MCF 10A (cell line): ENCODE measurements at regions of chr12 and their contacts with region 1.

Region 1: GRCh38 chr12:59149997-59150642 is 229.8 kb upstream of the LRIG3 start:
- DNase-seq: peak; percentile 84
- H3K4me3 Mint-ChIP-seq: no peak overlapping the region
- H3K27ac Mint-ChIP-seq: no peak overlapping the region
- H3K4me1 Mint-ChIP-seq: peaks cover 11% of the 10 kb centered on the region
- H3K27me3 Mint-ChIP-seq: no peaks in the 10 kb centered on the region
- CTCF ChIP-seq: peak; percentile 91

Region 2: DNA sequence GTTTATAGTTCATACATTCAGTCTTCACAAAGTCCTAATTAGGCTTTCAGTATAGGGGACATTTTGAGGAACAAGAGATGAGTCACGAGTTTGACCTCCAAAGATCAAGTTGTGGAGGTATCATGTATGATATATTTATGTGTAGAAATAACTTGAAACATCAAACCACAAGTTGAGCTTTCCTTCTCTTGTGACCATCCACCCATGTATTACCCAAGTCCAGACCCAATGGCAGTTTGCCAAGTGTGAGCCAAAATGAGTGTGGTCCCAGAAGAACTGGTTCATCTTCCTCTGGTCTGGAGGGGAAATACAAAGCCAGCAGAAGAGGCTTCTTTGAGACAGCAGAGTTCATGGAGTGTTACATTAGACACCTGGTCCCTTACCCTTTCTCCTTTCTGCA is 1103.8 kb before region 1 on chr12:
- CTCF ChIA-PET with region 1: no interaction called
- POLR2A ChIA-PET with region 1: no interaction called
- intact Hi-C with region 1: no loop called
- DNase-seq: no peak
- H3K4me3 Mint-ChIP-seq: no peak overlapping the region
- H3K27ac Mint-ChIP-seq: no peak overlapping the region
- H3K4me1 Mint-ChIP-seq: no peaks in the 10 kb centered on the region
- H3K27me3 Mint-ChIP-seq: no peaks in the 10 kb centered on the region
- CTCF ChIP-seq: no peak

Region 3: GRCh38 chr12:59164991-59165718 is 15.0 kb after region 1 on chr12:
- CTCF ChIA-PET with region 1: interaction called, 35 read pairs
- POLR2A ChIA-PET with region 1: no interaction called
- intact Hi-C with region 1: no loop called
- DNase-seq: peak; percentile 56
- H3K4me3 Mint-ChIP-seq: no peak overlapping the region
- H3K27ac Mint-ChIP-seq: no peak overlapping the region
- H3K4me1 Mint-ChIP-seq: no peaks in the 10 kb centered on the region
- H3K27me3 Mint-ChIP-seq: no peaks in the 10 kb centered on the region
- CTCF ChIP-seq: peak; percentile 23

Region 4: DNA sequence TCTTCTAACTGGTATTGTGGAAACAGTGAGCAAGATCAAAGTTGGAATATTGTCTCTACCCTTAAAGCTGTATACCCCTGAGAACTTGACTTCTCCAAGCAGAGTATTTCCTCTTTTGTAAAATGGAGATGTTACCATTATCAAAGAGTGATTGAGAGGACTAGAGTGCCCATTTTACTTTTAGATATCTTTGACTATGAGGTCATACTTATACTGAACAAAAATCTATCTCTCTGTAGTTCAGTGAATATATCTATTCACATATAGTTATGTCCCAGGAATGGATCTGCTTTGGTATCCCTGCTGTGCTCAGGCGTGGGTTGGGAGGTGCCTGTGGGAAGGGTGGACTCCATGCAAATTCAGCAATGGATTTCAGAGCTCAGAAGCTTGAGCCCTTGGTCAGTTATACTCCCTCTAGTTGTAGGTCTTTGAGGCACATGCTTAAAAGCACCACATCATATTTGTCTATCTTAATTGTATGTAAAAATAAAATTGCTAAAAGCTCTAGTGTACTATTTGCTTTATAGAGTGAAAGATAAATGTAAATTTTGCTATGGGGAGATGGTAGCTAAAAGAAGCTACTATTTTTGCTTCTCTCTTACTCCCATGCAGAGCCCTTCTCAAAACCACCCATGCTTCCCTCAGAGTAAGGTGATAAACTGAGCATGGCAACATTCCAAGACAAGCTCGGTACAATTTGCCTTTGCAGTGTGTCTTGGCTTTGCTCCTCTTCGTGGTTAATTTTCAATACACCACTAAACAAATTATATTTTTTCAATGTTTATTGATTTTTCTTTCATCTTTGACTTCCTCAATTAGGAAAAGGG is 500.5 kb after region 1 on chr12:
- CTCF ChIA-PET with region 1: no interaction called
- POLR2A ChIA-PET with region 1: no interaction called
- intact Hi-C with region 1: no loop called
- DNase-seq: no peak
- H3K4me3 Mint-ChIP-seq: no peak overlapping the region
- H3K27ac Mint-ChIP-seq: no peak overlapping the region
- H3K4me1 Mint-ChIP-seq: peaks cover 26% of the 10 kb centered on the region
- H3K27me3 Mint-ChIP-seq: no peaks in the 10 kb centered on the region
- CTCF ChIP-seq: no peak